Activated CD4-positive, alpha-beta memory T cell treated with anti-CD3 and anti-CD28 coated beads for 36 hours (primary cell): ENCODE measurements at regions of chr18 and their contacts with region 1.

Region 1: GRCh38 chr18:44358402-44358801 is 322.3 kb upstream of the SETBP1 start:
- DNase-seq: no peak
- H3K4me3 Mint-ChIP-seq: no peak overlapping the region
- H3K27ac Mint-ChIP-seq: no peak overlapping the region
- H3K4me1 Mint-ChIP-seq: no peaks in the 10 kb centered on the region
- H3K27me3 Mint-ChIP-seq: no peaks in the 10 kb centered on the region

Region 2: DNA sequence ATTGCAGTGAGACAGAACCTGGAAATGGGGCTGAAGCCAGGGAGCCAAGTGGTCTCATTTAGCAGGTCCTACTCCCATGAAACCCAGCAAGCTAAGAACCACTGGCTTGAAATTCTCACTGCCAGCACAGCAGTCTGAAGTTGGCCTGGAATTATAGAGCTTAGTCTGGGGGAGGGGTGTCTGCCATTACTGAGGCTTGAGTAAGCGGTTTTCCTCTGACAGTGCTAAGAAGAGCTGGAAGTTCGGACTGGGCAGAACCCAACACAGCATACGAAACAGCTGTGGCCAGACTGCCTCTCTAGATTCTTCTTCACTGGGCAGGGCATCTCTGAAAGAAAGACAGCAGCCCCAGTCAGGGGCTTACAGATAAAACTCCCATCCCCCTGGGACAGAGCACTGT is 16.6 kb after region 1 on chr18:
- CTCF ChIA-PET with region 1: no interaction called
- POLR2A ChIA-PET with region 1: no interaction called
- intact Hi-C with region 1: no loop called
- DNase-seq: no peak
- H3K4me3 Mint-ChIP-seq: no peak overlapping the region
- H3K27ac Mint-ChIP-seq: no peak overlapping the region
- H3K4me1 Mint-ChIP-seq: no peaks in the 10 kb centered on the region
- H3K27me3 Mint-ChIP-seq: no peaks in the 10 kb centered on the region

Region 3: DNA sequence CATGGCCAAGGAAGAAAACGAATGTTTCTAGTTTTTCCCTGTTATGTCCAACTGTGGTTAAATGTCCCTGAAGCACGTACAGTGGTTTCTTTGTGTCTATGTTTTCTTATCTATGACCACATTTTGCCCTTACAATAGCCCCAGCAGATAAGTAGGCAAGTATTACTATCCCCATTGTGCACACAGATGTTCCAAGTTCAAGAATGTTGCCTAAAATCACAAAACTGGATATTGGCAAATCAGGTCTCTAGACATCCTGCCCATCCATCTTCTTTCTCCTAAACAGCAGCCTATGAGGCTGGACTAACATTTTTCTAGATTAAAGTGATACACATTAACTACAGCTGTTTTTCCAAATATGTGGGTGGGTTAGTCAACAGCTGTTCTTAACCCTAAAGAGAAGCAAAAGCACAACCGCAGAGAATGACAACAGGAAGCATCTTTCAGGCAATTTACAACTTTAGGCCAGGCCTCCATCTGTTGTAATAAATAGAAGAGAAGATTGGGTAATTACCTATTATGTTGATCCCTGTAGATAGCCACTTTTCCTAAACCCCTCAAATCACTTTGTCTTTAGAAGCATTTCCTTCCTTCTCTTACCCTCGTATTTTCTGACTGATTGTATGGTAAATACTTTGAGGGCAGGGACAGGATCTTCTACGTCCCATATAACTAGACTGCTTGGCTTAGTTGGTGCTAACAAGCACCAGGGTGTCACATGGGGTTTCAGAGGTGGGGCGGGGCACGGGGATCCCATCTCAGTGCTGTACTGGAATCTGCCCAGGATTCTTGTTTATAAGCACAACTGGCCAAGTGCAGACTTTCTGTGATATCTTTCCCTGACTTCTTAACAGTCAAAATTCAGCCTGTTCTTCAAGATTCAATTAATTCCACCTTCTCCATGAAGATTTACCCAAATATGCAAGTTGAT is 190.2 kb after region 1 on chr18:
- CTCF ChIA-PET with region 1: no interaction called
- POLR2A ChIA-PET with region 1: no interaction called
- intact Hi-C with region 1: loop called (anchors 5 kb)
- DNase-seq: no peak
- H3K4me3 Mint-ChIP-seq: no peak overlapping the region
- H3K27ac Mint-ChIP-seq: no peak overlapping the region
- H3K4me1 Mint-ChIP-seq: no peaks in the 10 kb centered on the region
- H3K27me3 Mint-ChIP-seq: no peaks in the 10 kb centered on the region